ENCODE measurements at regions of chr12 and their contacts with region 1.

Region 1: DNA sequence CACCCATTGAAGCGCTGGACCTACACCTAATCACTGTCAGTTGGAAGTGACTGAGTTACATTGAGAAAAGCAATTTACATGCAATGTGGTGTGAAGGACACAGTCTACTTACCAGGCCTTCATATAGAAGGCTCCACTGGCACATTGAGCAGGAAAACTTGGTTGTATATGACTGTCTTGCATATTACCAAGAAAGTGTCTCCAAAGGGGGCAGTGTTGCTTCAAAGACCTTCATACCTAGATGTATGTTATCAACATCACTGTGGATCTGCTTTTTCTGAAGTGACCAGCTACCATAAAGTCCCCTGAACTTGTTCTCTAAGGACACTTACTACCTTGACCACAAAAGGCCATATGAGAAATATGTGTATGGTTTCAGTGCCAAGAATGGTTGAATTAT is 64.1 kb downstream of the NELL2 start:
- DNase-seq: peak; percentile 67
- H3K4me3 Mint-ChIP-seq: no peak overlapping the region
- H3K27ac Mint-ChIP-seq: peak overlapping the region; percentile 71
- H3K4me1 Mint-ChIP-seq: peaks cover 42% of the 10 kb centered on the region
- H3K27me3 Mint-ChIP-seq: no peaks in the 10 kb centered on the region

Region 2: GRCh38 chr12:44774815-44775411 is 37.1 kb before region 1 on chr12:
- CTCF ChIA-PET with region 1: interaction called, 6 read pairs
- intact Hi-C with region 1: loop called (anchors 2 kb)
- DNase-seq: peak; percentile 75
- H3K4me3 Mint-ChIP-seq: no peak overlapping the region
- H3K27ac Mint-ChIP-seq: no peak overlapping the region
- H3K4me1 Mint-ChIP-seq: peaks cover 8% of the 10 kb centered on the region
- H3K27me3 Mint-ChIP-seq: no peaks in the 10 kb centered on the region

Region 3: GRCh38 chr12:44795970-44796369 is 16.1 kb before region 1 on chr12:
- CTCF ChIA-PET with region 1: interaction called, 4 read pairs
- intact Hi-C with region 1: loop called (anchors 2 kb)
- DNase-seq: no peak
- H3K4me3 Mint-ChIP-seq: no peak overlapping the region
- H3K27ac Mint-ChIP-seq: no peak overlapping the region
- H3K4me1 Mint-ChIP-seq: peaks cover 17% of the 10 kb centered on the region
- H3K27me3 Mint-ChIP-seq: no peaks in the 10 kb centered on the region

Region 4: GRCh38 chr12:44827832-44828438 is 15.9 kb after region 1 on chr12:
- CTCF ChIA-PET with region 1: interaction called, 13 read pairs
- intact Hi-C with region 1: loop called (anchors 2 kb)
- DNase-seq: no peak
- H3K4me3 Mint-ChIP-seq: peak overlapping the region; percentile 58
- H3K27ac Mint-ChIP-seq: peak overlapping the region; percentile 89
- H3K4me1 Mint-ChIP-seq: peaks cover 64% of the 10 kb centered on the region
- H3K27me3 Mint-ChIP-seq: no peaks in the 10 kb centered on the region

Region 5: GRCh38 chr12:45309836-45310626 is 498.0 kb after region 1 on chr12:
- CTCF ChIA-PET with region 1: no interaction called
- intact Hi-C with region 1: no loop called
- DNase-seq: no peak
- H3K4me3 Mint-ChIP-seq: no peak overlapping the region
- H3K27ac Mint-ChIP-seq: no peak overlapping the region
- H3K4me1 Mint-ChIP-seq: no peaks in the 10 kb centered on the region
- H3K27me3 Mint-ChIP-seq: no peaks in the 10 kb centered on the region

Measured in activated naive CD4-positive, alpha-beta T cell treated with anti-CD3 and anti-CD28 coated beads for 36 hours (primary cell).